IMR-90 (cell line): ENCODE measurements at regions of chr6 and their contacts with region 1.

Region 1: GRCh38 chr6:43334466-43335095 is 26.0 kb upstream of the CRIP3 start:
- DNase-seq: peak; percentile 69
- ATAC-seq: peak; percentile 85
- H3K4me3 ChIP-seq: no peak overlapping the region
- H3K27ac ChIP-seq: no peak overlapping the region
- H3K4me1 ChIP-seq: no peaks in the 10 kb centered on the region
- H3K27me3 ChIP-seq: no peaks in the 10 kb centered on the region
- CTCF ChIP-seq: peak; percentile 69
- POLR2A ChIP-seq: no peak
- RAD21 ChIP-seq: peak; percentile 68

Region 2: GRCh38 chr6:43228951-43229802 is 105.4 kb before region 1 on chr6 and contains the start of gene DNPH1:
- CTCF ChIA-PET with region 1: interaction called, 3 read pairs
- POLR2A ChIA-PET with region 1: no interaction called
- dilution Hi-C with region 1: no loop called
- in situ Hi-C with region 1: no loop called
- intact Hi-C with region 1: loop called (anchors 1 kb)
- DNase-seq: peak; percentile 48
- ATAC-seq: peak; percentile 95
- H3K4me3 ChIP-seq: peak within 1 kb of the TSS; percentile 78
- H3K27ac ChIP-seq: peak within 1 kb of the TSS; percentile 68; the same call in 1 of the 2 replicates
- H3K4me1 ChIP-seq: peaks cover 6% of the 10 kb centered on the region; the same call in 1 of the 2 replicates
- H3K27me3 ChIP-seq: peaks cover 17% of the 10 kb centered on the region
- CTCF ChIP-seq: peak; percentile 91
- POLR2A ChIP-seq: no peak
- RAD21 ChIP-seq: peak; percentile 47
- total RNA-seq, gene DNPH1: 19.0 and 22.8 TPM in 2 replicates

Region 3: GRCh38 chr6:43263314-43264178 is 71.0 kb before region 1 on chr6:
- CTCF ChIA-PET with region 1: interaction called, 6 read pairs
- POLR2A ChIA-PET with region 1: no interaction called
- dilution Hi-C with region 1: no loop called
- in situ Hi-C with region 1: loop called (anchors 5 kb)
- intact Hi-C with region 1: loop called (anchors 1 kb)
- DNase-seq: peak; percentile 62
- ATAC-seq: peak; percentile 99
- H3K4me3 ChIP-seq: no peak overlapping the region
- H3K27ac ChIP-seq: no peak overlapping the region
- H3K4me1 ChIP-seq: no peaks in the 10 kb centered on the region
- H3K27me3 ChIP-seq: peaks cover 35% of the 10 kb centered on the region
- CTCF ChIP-seq: peak; percentile 90
- POLR2A ChIP-seq: no peak
- RAD21 ChIP-seq: peak; percentile 94

Region 4: GRCh38 chr6:43318011-43318410 is 16.6 kb before region 1 on chr6:
- CTCF ChIA-PET with region 1: interaction called, 10 read pairs
- POLR2A ChIA-PET with region 1: no interaction called
- dilution Hi-C with region 1: no loop called
- in situ Hi-C with region 1: no loop called
- intact Hi-C with region 1: no loop called
- DNase-seq: no peak
- ATAC-seq: no peak
- H3K4me3 ChIP-seq: no peak overlapping the region
- H3K27ac ChIP-seq: no peak overlapping the region
- H3K4me1 ChIP-seq: no peaks in the 10 kb centered on the region
- H3K27me3 ChIP-seq: peaks cover 14% of the 10 kb centered on the region
- CTCF ChIP-seq: no peak
- POLR2A ChIP-seq: no peak
- RAD21 ChIP-seq: no peak

Region 5: DNA sequence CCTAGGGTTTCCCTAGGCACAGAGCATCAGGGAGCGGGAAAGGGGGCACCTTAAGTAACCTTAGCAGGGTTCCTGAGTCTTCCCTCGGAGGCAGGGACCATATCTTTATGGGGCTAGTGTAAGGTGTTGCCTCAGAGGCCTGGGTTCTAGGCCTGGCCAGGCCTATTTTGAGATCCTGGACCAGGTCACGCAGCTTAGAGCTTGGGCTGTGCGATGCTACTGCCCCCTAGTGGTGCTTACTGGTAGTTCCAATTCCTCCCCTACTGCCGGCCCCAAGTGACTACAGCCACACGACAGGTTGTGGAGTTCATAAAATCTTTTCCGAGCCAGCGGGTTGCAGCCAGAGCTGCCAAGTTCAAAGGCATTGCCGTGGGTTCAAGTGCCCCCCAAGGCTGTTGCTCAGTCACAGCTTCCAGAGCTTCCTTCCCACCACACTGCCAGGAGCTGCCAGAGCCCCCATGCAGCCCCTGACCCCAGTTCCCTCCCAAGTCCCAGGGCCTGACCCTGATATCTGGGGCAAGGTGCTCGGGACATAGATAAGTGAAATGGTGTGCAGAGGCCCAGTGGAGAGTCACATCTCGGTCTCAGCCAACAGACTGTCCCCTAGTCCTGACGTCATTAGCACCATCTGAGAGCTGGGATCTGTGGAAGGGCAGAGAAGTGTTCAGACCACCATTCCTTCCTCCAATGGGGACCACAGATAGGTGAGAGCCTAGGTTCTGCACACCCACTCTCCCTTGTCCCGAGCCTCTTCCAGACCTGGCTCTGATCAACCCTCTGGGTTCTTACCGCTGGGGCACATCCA is 172.3 kb after region 1 on chr6:
- CTCF ChIA-PET with region 1: no interaction called
- POLR2A ChIA-PET with region 1: no interaction called
- dilution Hi-C with region 1: no loop called
- in situ Hi-C with region 1: no loop called
- intact Hi-C with region 1: no loop called
- DNase-seq: peak; percentile 78
- ATAC-seq: peak; percentile 58
- H3K4me3 ChIP-seq: no peak overlapping the region
- H3K27ac ChIP-seq: no peak overlapping the region
- H3K4me1 ChIP-seq: peaks cover 4% of the 10 kb centered on the region
- H3K27me3 ChIP-seq: no peaks in the 10 kb centered on the region
- CTCF ChIP-seq: peak; percentile 98
- POLR2A ChIP-seq: 0 out of 2 replicates have a peak, but pooled peaks have one; percentile 30
- RAD21 ChIP-seq: peak; percentile 94